ENCODE measurements at regions of chr5 and their contacts with region 1.

Region 1: DNA sequence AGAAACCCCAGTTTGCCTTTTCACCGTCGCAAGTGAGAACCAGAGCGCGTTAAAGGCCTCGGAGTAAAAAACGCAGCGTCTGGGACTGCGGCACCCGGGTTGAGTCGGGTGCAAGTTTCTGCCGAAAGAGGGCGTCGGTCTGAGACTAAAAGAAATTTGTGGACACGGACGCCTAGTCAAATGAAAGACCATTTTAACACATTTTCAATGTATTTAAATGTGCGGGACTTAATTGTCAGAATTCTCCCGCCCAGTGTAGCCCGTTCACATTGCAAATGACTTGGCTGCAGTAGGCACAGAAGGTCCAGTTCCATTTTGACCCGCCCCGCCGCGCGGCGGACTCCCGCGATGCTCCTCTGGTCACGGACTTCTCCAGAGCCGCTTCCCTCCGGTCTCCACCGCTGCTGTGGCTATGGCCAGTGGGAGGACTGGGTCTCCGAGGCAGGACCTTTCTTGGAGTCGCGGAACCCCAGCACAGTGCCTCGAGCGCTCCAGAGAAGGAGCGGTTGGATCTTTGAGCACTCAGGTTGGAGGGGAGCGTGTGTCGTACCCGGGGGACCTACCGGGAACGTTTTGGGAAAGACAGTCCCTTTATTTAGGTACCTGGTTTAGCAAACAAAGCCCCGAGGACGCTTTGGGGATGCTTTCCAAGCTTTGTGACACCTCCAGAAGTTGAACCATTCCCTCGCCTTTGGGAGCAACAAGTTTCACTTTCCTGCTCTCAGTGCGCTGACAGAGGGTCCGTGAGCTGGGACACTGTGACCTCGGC is 1.2 kb upstream of the NPR3 start:
- DNase-seq: no peak
- ATAC-seq: peak; percentile 33 to 42
- H3K4me3 ChIP-seq: peak overlapping the region; percentile 54 to 66 (median 63)
- H3K27ac ChIP-seq: peak overlapping the region; percentile 9 to 52 (median 29)
- H3K4me1 ChIP-seq: peaks cover 0 to 30% of the 10 kb centered on the region in 2 donors
- H3K27me3 ChIP-seq: peaks cover 13 to 32% (median 19%) of the 10 kb centered on the region in 3 donors
- CTCF ChIP-seq: peak in 3 of 5 experiments; percentile 26 to 59 (median 27)
- POLR2A ChIP-seq: no peak

Region 2: DNA sequence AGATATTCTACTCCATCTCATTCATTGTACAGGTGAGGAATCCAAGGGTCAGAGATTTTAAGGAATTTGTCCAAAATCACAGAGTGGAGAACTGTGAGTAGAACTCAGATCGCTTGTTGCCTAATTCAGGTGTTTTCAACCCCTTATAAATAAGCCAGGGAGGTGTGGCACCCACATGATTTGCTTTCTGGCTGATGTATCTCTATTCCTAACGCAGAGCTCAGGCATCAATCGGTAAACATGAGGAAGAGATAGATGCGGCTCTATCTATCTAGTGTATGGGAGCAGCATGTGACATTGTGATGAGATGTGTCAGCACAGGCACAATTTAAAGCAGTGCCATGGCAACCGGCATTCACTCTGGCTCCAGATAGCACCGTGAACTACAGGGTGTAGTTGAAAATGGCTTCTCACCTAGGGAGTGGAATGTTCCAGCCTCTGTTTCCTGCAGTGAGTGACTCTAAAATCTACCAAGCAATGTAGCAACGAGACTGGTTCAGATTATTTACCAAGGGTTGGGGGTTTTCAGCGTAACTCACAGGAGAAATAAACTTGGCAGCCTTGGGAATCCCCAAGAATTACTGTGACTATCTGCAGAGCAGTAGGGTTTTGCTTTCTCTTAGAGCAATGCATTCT is 178.0 kb before region 1 on chr5:
- in situ Hi-C with region 1: no loop called
- intact Hi-C with region 1: no loop called
- DNase-seq: no peak
- ATAC-seq: no peak
- H3K4me3 ChIP-seq: no peak overlapping the region
- H3K27ac ChIP-seq: no peak overlapping the region
- H3K4me1 ChIP-seq: no peaks in the 10 kb centered on the region
- H3K27me3 ChIP-seq: no peaks in the 10 kb centered on the region
- CTCF ChIP-seq: no peak
- POLR2A ChIP-seq: no peak

Region 3: GRCh38 chr5:32771037-32771436 is 61.1 kb after region 1 on chr5:
- in situ Hi-C with region 1: no loop called
- intact Hi-C with region 1: loop called (anchors 5 kb)
- DNase-seq: no peak
- ATAC-seq: no peak
- H3K4me3 ChIP-seq: no peak overlapping the region
- H3K27ac ChIP-seq: no peak overlapping the region
- H3K4me1 ChIP-seq: no peaks in the 10 kb centered on the region
- H3K27me3 ChIP-seq: no peaks in the 10 kb centered on the region
- CTCF ChIP-seq: no peak
- POLR2A ChIP-seq: no peak

Region 4: DNA sequence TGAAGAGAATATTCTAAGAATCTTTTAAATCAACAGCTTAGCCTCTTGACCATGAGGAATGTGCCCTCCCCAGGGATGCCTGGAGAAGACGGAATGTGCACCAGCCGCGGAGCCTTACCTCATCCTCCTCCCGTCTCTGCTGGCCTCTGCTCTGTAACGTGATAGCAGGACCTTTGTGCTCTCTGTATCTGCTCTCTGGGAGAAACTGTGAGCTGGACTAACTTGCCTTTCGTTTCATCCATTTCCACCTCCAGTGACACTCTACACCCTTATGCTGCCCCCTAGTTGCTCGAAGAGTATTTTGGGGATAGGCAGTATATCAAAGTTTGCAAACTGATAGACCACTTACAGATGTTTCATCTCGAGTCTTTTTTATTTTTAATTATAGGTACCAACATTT is 142.6 kb after region 1 on chr5:
- in situ Hi-C with region 1: no loop called
- intact Hi-C with region 1: loop called (anchors 5 kb)
- DNase-seq: peak; percentile 46 to 73
- ATAC-seq: peak; percentile 79 to 81
- H3K4me3 ChIP-seq: no peak overlapping the region
- H3K27ac ChIP-seq: no peak overlapping the region
- H3K4me1 ChIP-seq: no peaks in the 10 kb centered on the region
- H3K27me3 ChIP-seq: no peaks in the 10 kb centered on the region
- CTCF ChIP-seq: peak in 1 of 5 experiments; percentile 8
- POLR2A ChIP-seq: no peak

Region 5: DNA sequence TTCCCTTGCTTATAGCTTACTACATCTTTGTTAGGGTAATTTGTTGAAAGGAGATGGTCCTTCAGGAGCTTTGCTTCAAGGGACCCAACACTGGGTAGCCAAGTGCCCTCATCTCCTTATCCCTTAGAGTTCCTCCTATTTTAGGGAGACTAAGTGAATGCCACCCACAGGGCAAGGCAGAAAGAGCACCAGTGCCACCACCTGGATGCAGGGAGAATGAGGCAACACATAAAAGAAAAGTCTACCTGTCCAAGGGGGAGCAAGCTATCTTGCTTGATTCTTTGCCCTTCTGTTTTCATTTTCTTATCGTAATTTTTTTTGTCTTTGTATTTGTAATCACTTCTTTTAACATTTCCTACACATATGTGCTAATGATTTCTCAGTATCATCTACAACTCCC is 206.7 kb after region 1 on chr5:
- in situ Hi-C with region 1: no loop called
- intact Hi-C with region 1: loop called (anchors 5 kb)
- DNase-seq: no peak
- ATAC-seq: no peak
- H3K4me3 ChIP-seq: no peak overlapping the region
- H3K27ac ChIP-seq: no peak overlapping the region
- H3K4me1 ChIP-seq: no peaks in the 10 kb centered on the region
- H3K27me3 ChIP-seq: no peaks in the 10 kb centered on the region
- CTCF ChIP-seq: peak in 1 of 5 experiments; percentile 22
- POLR2A ChIP-seq: no peak

Region 6: DNA sequence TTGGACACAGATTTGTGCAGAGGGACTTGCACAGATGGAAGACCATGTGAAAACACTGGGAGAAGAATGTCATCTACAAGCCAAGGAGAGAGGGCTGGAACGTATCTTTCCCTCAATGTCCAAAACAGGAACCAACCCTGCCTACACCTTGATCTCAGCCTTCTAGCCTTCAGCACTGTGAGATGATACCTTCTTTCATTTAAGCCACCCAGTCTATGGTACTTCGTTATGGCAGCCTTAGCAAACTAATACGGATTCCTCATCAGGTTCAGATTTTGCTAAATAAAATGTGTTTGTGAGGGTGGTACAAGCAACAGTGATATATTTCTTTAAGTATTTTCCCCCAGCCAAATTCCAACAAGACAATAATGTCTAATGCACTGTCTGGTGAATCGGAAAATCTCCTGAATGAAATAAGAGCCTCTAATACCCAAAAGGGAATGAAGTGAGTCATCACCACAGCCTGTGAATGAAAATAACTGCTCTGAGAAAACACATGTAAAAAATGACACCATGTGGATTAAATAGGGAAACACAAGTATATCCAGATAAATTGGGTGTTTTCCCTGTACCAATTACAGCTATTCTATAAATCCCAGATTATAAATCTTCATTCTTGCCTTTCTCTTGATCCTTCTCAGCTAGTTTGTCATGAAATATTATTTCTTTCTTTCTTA is 548.0 kb after region 1 on chr5:
- in situ Hi-C with region 1: no loop called
- intact Hi-C with region 1: loop called (anchors 1 kb)
- DNase-seq: no peak
- ATAC-seq: peak; percentile 68 to 70
- H3K4me3 ChIP-seq: no peak overlapping the region
- H3K27ac ChIP-seq: peak overlapping the region in 1 of 4 donors; percentile 32
- H3K4me1 ChIP-seq: no peaks in the 10 kb centered on the region
- H3K27me3 ChIP-seq: no peaks in the 10 kb centered on the region
- CTCF ChIP-seq: no peak
- POLR2A ChIP-seq: no peak

Region 7: GRCh38 chr5:33299621-33300208 is 589.8 kb after region 1 on chr5:
- in situ Hi-C with region 1: no loop called
- intact Hi-C with region 1: loop called (anchors 5 kb)
- DNase-seq: no peak
- ATAC-seq: no peak
- H3K4me3 ChIP-seq: no peak overlapping the region
- H3K27ac ChIP-seq: no peak overlapping the region
- H3K4me1 ChIP-seq: peaks cover 0 to 3% of the 10 kb centered on the region in 2 donors
- H3K27me3 ChIP-seq: no peaks in the 10 kb centered on the region
- CTCF ChIP-seq: peak in 3 of 5 experiments; percentile 14 to 49 (median 27)
- POLR2A ChIP-seq: no peak

Measured in gastrocnemius medialis (tissue), 4 donors.